ENCODE measurements at regions of chr6 and their contacts with region 1.

Region 1: GRCh38 chr6:142155895-142156757 is 9.1 kb downstream of the VTA1 start:
- DNase-seq: no peak
- H3K4me3 ChIP-seq: no peak overlapping the region
- H3K27ac ChIP-seq: peak overlapping the region in 4 of 8 donors; percentile 8 to 61 (median 44)
- H3K4me1 ChIP-seq: peaks cover 0 to 86% (median 38%) of the 10 kb centered on the region in 6 donors
- H3K27me3 ChIP-seq: no peaks in the 10 kb centered on the region
- CTCF ChIP-seq: peak in 7 of 11 experiments; percentile 36 to 49 (median 41)
- POLR2A ChIP-seq: no peak

Region 2: GRCh38 chr6:142207265-142207877 is 51.2 kb after region 1 on chr6:
- intact Hi-C with region 1: loop called (anchors 5 kb)
- DNase-seq: no peak
- H3K4me3 ChIP-seq: no peak overlapping the region
- H3K27ac ChIP-seq: peak overlapping the region in 1 of 8 donors; percentile 4
- H3K4me1 ChIP-seq: no peaks in the 10 kb centered on the region
- H3K27me3 ChIP-seq: no peaks in the 10 kb centered on the region
- CTCF ChIP-seq: peak; percentile 45 to 82 (median 69)
- POLR2A ChIP-seq: no peak

Region 3: GRCh38 chr6:142387997-142388815 is 232.1 kb after region 1 on chr6:
- intact Hi-C with region 1: loop called (anchors 10 kb)
- DNase-seq: no peak
- H3K4me3 ChIP-seq: no peak overlapping the region
- H3K27ac ChIP-seq: no peak overlapping the region
- H3K4me1 ChIP-seq: peaks cover 0 to 4% (median 0%) of the 10 kb centered on the region in 6 donors
- H3K27me3 ChIP-seq: no peaks in the 10 kb centered on the region
- CTCF ChIP-seq: peak in 9 of 11 experiments; percentile 12 to 50 (median 43)
- POLR2A ChIP-seq: no peak

Region 4: GRCh38 chr6:142489722-142490610 is 333.8 kb after region 1 on chr6:
- intact Hi-C with region 1: no loop called
- DNase-seq: no peak
- H3K4me3 ChIP-seq: no peak overlapping the region
- H3K27ac ChIP-seq: no peak overlapping the region
- H3K4me1 ChIP-seq: no peaks in the 10 kb centered on the region
- H3K27me3 ChIP-seq: peaks cover 0 to 4% (median 0%) of the 10 kb centered on the region in 7 donors
- CTCF ChIP-seq: no peak
- POLR2A ChIP-seq: no peak

Measured in spleen (tissue), 13 donors.